ENCODE measurements at regions of chr12 and their contacts with region 1.

Region 1: GRCh38 chr12:32671930-32672780 is 6.9 kb upstream of the DNM1L start:
- DNase-seq: peak; percentile 51
- ATAC-seq: peak; percentile 83
- H3K4me3 ChIP-seq: no peak overlapping the region
- H3K27ac ChIP-seq: no peak overlapping the region
- H3K4me1 ChIP-seq: 0 out of 2 replicates have a peak, but pooled peaks cover 4% of the 10 kb centered on the region
- H3K27me3 ChIP-seq: no peaks in the 10 kb centered on the region
- CTCF ChIP-seq: peak; percentile 84

Region 2: DNA sequence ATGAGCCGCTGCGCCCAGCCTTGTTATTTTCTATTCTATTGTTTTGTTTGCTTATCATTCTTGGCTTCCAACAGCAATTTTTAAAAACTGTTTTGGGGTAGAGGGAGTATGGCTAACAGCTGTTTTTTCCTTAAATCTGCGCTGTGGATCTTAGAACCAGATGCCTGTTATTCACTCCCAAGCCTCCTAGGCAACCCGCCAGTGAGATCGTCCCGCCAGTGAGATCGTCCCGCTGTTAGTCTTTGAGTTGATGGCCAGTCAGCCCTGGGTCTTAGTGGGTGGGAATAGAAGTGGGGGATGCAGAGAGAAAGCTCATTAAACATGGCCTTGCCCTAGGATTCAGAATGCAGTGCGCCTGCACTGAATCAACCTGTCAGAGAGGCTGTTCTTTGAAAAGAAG is 632.8 kb before region 1 on chr12:
- CTCF ChIA-PET with region 1: no interaction called
- POLR2A ChIA-PET with region 1: interaction called, 11 read pairs
- in situ Hi-C with region 1: no loop called
- intact Hi-C with region 1: no loop called
- DNase-seq: no peak
- ATAC-seq: no peak
- H3K4me3 ChIP-seq: no peak overlapping the region
- H3K27ac ChIP-seq: no peak overlapping the region
- H3K4me1 ChIP-seq: 0 out of 2 replicates have a peak, but pooled peaks cover 3% of the 10 kb centered on the region
- H3K27me3 ChIP-seq: no peaks in the 10 kb centered on the region
- CTCF ChIP-seq: no peak

Region 3: DNA sequence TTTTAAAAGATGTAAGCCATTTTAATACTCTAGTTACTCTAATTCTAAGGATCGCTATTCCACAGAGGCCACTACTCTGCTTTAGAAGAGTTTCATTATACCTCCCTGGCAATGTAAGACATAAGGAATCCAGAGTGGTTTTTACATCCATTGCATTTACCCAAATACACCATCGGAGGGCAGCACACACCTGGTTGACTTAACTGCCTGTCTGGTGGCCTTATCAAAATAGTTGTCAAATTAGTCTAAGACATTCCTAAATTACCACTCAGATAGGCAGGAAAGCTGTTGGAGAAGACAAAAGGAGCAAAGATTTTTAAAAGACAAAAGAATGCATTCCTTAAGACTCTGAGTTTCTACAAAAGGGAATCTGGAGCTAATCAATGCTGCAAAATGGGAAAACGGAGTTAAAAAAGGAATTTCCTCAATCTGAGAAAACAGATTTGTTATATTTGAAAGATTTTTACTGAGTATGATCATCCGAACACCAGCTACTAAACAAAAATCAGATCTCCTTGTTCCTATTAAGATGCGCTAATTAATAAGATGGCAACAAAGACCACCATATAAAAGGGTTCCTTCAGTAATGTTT is 306.6 kb before region 1 on chr12:
- CTCF ChIA-PET with region 1: no interaction called
- POLR2A ChIA-PET with region 1: interaction called, 4 read pairs
- in situ Hi-C with region 1: no loop called
- intact Hi-C with region 1: loop called (anchors 2 kb)
- DNase-seq: peak; percentile 77
- ATAC-seq: peak; percentile 84
- H3K4me3 ChIP-seq: no peak overlapping the region
- H3K27ac ChIP-seq: no peak overlapping the region
- H3K4me1 ChIP-seq: no peaks in the 10 kb centered on the region
- H3K27me3 ChIP-seq: no peaks in the 10 kb centered on the region
- CTCF ChIP-seq: peak; percentile 86; the same call in 1 of the 2 replicates

Region 4: GRCh38 chr12:33023760-33024159 is 351.6 kb after region 1 on chr12:
- CTCF ChIA-PET with region 1: no interaction called
- POLR2A ChIA-PET with region 1: no interaction called
- in situ Hi-C with region 1: no loop called
- intact Hi-C with region 1: no loop called
- DNase-seq: no peak
- ATAC-seq: no peak
- H3K4me3 ChIP-seq: no peak overlapping the region
- H3K27ac ChIP-seq: no peak overlapping the region
- H3K4me1 ChIP-seq: no peaks in the 10 kb centered on the region
- H3K27me3 ChIP-seq: no peaks in the 10 kb centered on the region
- CTCF ChIP-seq: no peak

Measured in Panc1 (cell line).